Activated naive CD4-positive, alpha-beta T cell treated with anti-CD3 and anti-CD28 coated beads for 36 hours (primary cell): ENCODE measurements at regions of chr6 and their contacts with region 1.

Region 1: GRCh38 chr6:125804264-125804663 is 13.5 kb downstream of the NCOA7 start:
- DNase-seq: peak; percentile 67
- H3K4me3 Mint-ChIP-seq: no peak overlapping the region
- H3K27ac Mint-ChIP-seq: no peak overlapping the region
- H3K4me1 Mint-ChIP-seq: peaks cover 63% of the 10 kb centered on the region
- H3K27me3 Mint-ChIP-seq: no peaks in the 10 kb centered on the region

Region 2: DNA sequence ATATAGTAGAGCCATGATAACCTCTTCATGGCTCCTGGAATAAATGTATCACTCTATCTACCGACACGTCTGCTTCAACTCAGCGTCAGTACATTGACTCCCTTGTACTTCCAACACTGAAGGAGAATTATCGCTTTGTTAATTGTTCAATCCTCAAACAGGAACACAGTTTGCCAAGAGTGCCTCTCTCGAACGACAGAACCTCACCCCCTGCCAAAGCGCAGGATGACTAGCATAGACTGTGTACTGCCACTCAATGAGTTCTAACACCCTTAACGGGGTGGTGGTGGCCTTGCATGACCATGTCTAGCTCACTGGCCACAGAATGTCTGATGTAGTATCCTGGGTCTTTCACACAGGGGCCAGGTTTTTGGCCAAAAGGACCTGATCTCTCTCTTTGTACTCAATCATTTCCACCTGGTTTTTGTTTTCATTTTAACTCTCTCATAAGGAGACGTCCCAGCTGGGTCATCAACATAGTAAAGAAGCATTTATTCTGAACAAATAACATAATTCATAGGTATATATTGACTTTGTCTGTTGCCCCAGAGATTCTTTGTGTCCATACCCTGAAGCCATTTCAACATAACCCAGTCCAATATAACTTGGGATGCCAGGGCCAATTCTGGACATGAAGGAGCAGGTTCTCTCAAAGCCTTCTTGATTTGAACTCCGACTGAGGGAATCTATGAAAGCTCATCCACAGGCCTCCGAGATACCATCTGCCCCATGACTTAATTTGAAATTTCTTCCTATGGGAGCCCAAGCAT is 136.0 kb before region 1 on chr6:
- CTCF ChIA-PET with region 1: no interaction called
- intact Hi-C with region 1: no loop called
- DNase-seq: no peak
- H3K4me3 Mint-ChIP-seq: no peak overlapping the region
- H3K27ac Mint-ChIP-seq: no peak overlapping the region
- H3K4me1 Mint-ChIP-seq: no peaks in the 10 kb centered on the region
- H3K27me3 Mint-ChIP-seq: peaks cover 8% of the 10 kb centered on the region

Region 3: GRCh38 chr6:125918681-125919566 is 114.7 kb after region 1 on chr6:
- CTCF ChIA-PET with region 1: no interaction called
- intact Hi-C with region 1: loop called (anchors 1 kb)
- DNase-seq: peak; percentile 73
- H3K4me3 Mint-ChIP-seq: peak overlapping the region; percentile 78
- H3K27ac Mint-ChIP-seq: peak overlapping the region; percentile 94
- H3K4me1 Mint-ChIP-seq: peaks cover 33% of the 10 kb centered on the region
- H3K27me3 Mint-ChIP-seq: no peaks in the 10 kb centered on the region

Region 4: DNA sequence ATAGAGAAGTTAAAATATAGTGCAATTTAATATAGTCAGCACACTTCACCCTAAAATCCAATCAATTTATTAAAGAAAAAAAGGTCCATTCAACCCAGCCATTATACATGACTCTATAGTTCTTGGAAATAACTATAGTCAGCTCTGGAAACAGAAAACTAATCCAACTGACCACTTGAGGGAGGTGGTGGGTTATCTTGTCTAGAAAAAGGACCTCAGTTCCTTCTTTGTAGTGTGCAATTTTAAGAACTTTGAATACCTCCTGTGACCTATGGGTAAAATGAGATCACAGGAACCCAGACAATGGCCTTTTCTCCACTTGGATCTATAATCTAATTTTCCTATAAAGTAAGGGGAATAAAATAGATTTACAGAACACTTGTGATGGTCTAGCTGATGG is 372.0 kb after region 1 on chr6:
- CTCF ChIA-PET with region 1: no interaction called
- intact Hi-C with region 1: loop called (anchors 1 kb)
- DNase-seq: no peak
- H3K4me3 Mint-ChIP-seq: no peak overlapping the region
- H3K27ac Mint-ChIP-seq: no peak overlapping the region
- H3K4me1 Mint-ChIP-seq: peaks cover 2% of the 10 kb centered on the region
- H3K27me3 Mint-ChIP-seq: no peaks in the 10 kb centered on the region

Region 5: GRCh38 chr6:126388104-126388598 is 583.9 kb after region 1 on chr6:
- CTCF ChIA-PET with region 1: no interaction called
- intact Hi-C with region 1: no loop called
- DNase-seq: no peak
- H3K4me3 Mint-ChIP-seq: no peak overlapping the region
- H3K27ac Mint-ChIP-seq: no peak overlapping the region
- H3K4me1 Mint-ChIP-seq: no peaks in the 10 kb centered on the region
- H3K27me3 Mint-ChIP-seq: peaks cover 2% of the 10 kb centered on the region